Calu3 (cell line): ENCODE measurements at regions of chr11 and their contacts with region 1.

Region 1: DNA sequence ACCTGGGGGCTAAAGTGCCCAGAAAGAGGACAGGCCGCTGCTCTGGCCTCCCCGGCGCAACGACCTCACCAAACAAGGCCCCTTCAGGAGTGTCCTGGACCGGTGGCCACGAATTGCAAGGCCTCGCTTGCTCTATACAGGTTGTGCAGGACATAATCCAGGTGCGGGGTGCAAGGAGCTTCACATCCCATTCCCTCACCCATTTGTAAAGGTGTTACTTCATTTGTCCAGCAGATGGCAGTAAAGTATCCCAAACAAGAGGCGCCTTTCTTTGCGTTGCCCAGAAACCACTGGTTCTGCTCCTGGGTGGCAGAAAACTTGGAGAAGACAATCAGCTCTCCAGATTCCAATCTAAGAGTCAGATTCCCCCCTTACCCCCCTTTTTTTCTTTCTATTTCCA is 35.9 kb upstream of the PRDM11 start:
- DNase-seq: peak; percentile 52
- H3K4me3 Mint-ChIP-seq: no peak overlapping the region
- H3K27ac Mint-ChIP-seq: no peak overlapping the region
- H3K4me1 Mint-ChIP-seq: no peaks in the 10 kb centered on the region
- H3K27me3 Mint-ChIP-seq: peaks cover 48% of the 10 kb centered on the region
- CTCF ChIP-seq: peak; percentile 45

Region 2: GRCh38 chr11:44927174-44927661 is 183.3 kb before region 1 on chr11:
- CTCF ChIA-PET with region 1: interaction called, 116 read pairs
- intact Hi-C with region 1: loop called (anchors 1 kb)
- DNase-seq: peak; percentile 86
- H3K4me3 Mint-ChIP-seq: no peak overlapping the region
- H3K27ac Mint-ChIP-seq: no peak overlapping the region
- H3K4me1 Mint-ChIP-seq: no peaks in the 10 kb centered on the region
- H3K27me3 Mint-ChIP-seq: peaks cover 64% of the 10 kb centered on the region
- CTCF ChIP-seq: peak; percentile 88

Region 3: DNA sequence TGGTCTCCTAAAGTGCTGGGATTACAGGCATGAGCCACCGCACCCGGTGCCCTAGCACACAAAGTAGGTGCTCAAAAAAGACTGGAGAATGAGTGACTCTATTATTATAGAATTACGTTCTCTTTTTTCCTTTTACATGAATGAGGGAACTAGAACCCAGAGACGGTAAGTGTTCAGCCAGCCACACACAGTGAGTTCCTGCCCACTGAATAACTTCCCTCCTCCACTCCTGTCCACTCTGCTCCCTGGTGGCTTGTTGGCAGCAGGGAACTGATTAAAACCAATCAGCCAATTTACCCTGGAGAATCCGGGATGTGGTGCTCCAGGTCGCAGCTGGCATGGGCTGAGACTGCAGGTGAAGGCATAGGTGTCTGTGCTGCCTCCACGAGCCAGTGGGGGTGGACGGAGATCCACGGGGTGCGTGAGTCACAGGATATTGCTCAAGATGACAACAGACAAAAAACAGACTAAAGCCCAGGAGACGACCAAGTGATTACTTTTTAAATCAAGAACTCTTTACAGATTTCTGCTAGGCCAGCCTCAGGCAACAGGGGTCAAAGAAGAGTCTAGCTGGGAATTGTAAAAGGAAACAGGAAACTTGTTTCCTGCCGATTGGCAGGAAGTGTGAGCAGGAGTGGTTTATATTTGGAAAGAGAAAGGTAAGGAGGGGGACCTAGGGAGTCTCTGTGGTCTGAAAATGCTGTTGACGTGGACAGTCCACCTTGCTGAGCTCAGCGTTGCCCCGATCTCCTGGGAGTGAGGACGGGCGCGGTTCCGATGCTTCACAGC is 64.7 kb before region 1 on chr11:
- CTCF ChIA-PET with region 1: no interaction called
- intact Hi-C with region 1: no loop called
- DNase-seq: peak; percentile 32
- H3K4me3 Mint-ChIP-seq: no peak overlapping the region
- H3K27ac Mint-ChIP-seq: no peak overlapping the region
- H3K4me1 Mint-ChIP-seq: peaks cover 11% of the 10 kb centered on the region
- H3K27me3 Mint-ChIP-seq: peaks cover 57% of the 10 kb centered on the region
- CTCF ChIP-seq: no peak

Region 4: GRCh38 chr11:45089251-45089650 is 21.3 kb before region 1 on chr11:
- CTCF ChIA-PET with region 1: no interaction called
- intact Hi-C with region 1: no loop called
- DNase-seq: no peak
- H3K4me3 Mint-ChIP-seq: no peak overlapping the region
- H3K27ac Mint-ChIP-seq: no peak overlapping the region
- H3K4me1 Mint-ChIP-seq: no peaks in the 10 kb centered on the region
- H3K27me3 Mint-ChIP-seq: peaks cover 84% of the 10 kb centered on the region
- CTCF ChIP-seq: no peak

Region 5: GRCh38 chr11:45168366-45169130 is 58.0 kb after region 1 on chr11:
- CTCF ChIA-PET with region 1: no interaction called
- intact Hi-C with region 1: no loop called
- DNase-seq: no peak
- H3K4me3 Mint-ChIP-seq: no peak overlapping the region
- H3K27ac Mint-ChIP-seq: no peak overlapping the region
- H3K4me1 Mint-ChIP-seq: peaks cover 15% of the 10 kb centered on the region
- H3K27me3 Mint-ChIP-seq: no peaks in the 10 kb centered on the region
- CTCF ChIP-seq: no peak

Region 6: DNA sequence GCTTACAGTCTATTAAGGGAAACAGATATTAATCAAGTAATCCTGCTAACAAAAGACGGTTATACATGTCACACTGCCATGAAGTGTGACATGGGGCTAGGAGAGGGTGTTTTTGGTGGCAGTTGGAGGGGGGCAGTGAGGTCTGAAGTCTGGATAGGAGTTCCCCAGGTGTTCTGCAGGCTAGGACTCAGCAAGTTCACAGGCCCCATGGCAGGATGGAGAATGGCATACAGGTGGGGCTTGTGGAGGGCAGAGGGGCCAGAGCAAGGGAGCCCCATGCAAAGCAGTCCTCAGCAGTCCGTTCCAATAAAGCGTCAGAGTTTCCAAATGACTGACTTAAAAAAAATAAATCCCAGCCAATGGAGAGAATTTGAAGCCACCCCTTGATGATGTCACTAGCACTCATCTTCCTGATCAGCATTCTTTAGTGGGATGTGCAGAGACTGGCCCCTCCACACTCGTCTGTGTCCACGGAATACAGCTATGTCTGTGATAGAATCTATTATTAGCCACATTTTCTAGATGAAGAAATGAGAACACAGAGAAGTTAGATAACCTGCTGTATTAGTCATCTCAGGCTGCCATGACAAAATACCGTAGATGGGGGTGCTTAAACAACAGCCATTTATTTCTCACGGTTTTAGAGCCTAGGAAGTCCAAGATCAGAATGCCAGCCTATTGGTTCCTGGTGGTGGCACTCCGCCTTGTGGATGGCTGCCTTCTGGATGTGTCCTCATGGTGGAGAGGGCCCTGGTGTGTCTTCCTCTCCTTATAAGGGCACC is 68.5 kb after region 1 on chr11:
- CTCF ChIA-PET with region 1: interaction called, 4 read pairs
- intact Hi-C with region 1: loop called (anchors 5 kb)
- DNase-seq: no peak
- H3K4me3 Mint-ChIP-seq: no peak overlapping the region
- H3K27ac Mint-ChIP-seq: no peak overlapping the region
- H3K4me1 Mint-ChIP-seq: no peaks in the 10 kb centered on the region
- H3K27me3 Mint-ChIP-seq: no peaks in the 10 kb centered on the region
- CTCF ChIP-seq: no peak

Region 7: GRCh38 chr11:45233121-45233803 is 122.7 kb after region 1 on chr11:
- CTCF ChIA-PET with region 1: interaction called, 9 read pairs
- intact Hi-C with region 1: loop called (anchors 10 kb)
- DNase-seq: peak; percentile 79
- H3K4me3 Mint-ChIP-seq: no peak overlapping the region
- H3K27ac Mint-ChIP-seq: no peak overlapping the region
- H3K4me1 Mint-ChIP-seq: no peaks in the 10 kb centered on the region
- H3K27me3 Mint-ChIP-seq: peaks cover 31% of the 10 kb centered on the region
- CTCF ChIP-seq: peak; percentile 83

Region 8: DNA sequence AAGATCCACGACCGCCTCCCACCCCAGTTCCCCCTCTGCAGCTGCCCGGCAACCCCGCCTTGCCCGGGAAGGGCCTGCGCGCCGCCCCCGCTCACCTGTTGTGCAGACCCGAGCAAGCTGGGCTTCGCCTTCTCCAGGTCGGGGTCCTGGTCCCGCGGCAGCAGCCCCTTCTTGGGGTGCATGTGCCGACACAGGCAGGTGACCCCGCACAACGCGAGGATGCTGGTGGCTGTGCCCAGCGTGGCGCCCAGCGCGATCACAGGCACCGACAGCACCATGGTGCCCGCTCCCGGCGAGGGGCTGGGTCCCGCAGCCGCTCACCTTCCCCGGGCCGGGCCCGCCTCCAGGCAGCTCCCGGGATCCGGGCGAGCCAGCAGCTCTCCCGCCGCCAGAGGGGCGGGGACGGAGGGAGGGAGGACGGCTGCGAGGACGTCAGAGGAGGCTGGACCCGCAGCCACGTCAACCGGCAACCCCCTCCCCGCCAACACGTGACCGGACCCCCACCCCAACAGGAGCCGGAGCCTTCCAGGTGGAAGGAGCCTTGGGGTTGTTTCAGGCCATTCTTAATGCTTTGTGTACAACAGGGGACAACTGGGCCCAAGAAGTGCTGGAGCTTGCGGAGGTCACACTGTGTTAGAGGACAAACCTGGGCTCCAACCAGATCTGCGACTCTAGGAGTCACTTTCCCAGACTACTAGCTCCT is 175.5 kb after region 1 on chr11 and contains the start of gene SYT13:
- CTCF ChIA-PET with region 1: interaction called, 10 read pairs
- intact Hi-C with region 1: no loop called
- DNase-seq: peak; percentile 87
- H3K4me3 Mint-ChIP-seq: peak within 1 kb of the TSS; percentile 73
- H3K27ac Mint-ChIP-seq: peak within 1 kb of the TSS; percentile 34
- H3K4me1 Mint-ChIP-seq: peaks cover 32% of the 10 kb centered on the region
- H3K27me3 Mint-ChIP-seq: peaks cover 23% of the 10 kb centered on the region
- CTCF ChIP-seq: no peak
- total RNA-seq, gene SYT13: 31.1 and 36.8 TPM in 2 replicates

Region 9: DNA sequence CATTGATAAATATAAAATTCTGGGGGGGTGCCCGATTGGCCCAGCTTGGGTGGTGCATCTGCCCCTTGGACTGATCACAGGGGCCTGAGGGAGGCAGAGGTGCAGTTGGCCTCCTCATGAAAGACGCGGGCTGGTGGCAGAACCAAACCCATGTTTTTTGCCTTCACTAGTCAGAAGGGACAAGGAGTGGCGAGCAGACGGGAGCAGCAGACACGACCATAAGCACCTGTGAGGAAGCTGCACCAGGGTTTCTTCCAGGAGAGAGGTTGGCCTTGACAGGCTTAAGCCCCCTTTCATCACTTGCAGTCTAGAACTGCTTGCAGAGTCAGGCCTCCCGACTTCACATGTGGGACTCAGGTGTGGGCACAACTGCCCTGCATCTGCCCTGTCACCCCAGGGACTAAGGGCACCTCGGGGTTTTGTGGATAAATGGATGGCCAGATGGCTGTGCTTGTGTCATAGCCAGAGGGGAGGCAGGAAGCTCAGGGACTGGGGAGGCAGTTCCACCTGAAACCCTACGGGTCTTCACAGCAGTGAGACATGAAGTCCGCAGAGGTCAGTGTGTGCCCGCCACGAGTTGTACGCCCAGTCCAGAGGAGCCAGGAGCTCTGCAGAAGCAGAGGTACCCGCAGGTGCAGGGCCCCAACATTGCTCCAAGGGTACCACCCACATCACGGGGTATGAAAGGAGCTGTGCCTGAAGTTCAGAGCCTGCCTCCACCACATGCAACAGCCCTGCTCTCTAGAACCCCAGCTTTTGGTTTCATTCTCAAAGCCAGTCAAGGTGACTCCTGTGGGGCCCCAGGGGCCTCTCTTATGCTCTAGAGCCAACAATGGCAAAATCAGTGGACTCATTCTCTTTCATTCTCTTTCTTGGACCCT is 193.8 kb after region 1 on chr11:
- CTCF ChIA-PET with region 1: no interaction called
- intact Hi-C with region 1: no loop called
- DNase-seq: no peak
- H3K4me3 Mint-ChIP-seq: no peak overlapping the region
- H3K27ac Mint-ChIP-seq: no peak overlapping the region
- H3K4me1 Mint-ChIP-seq: no peaks in the 10 kb centered on the region
- H3K27me3 Mint-ChIP-seq: peaks cover 65% of the 10 kb centered on the region
- CTCF ChIP-seq: no peak

Region 10: GRCh38 chr11:45332276-45332934 is 221.8 kb after region 1 on chr11:
- CTCF ChIA-PET with region 1: interaction called, 15 read pairs
- intact Hi-C with region 1: loop called (anchors 1 kb)
- DNase-seq: peak; percentile 36
- H3K4me3 Mint-ChIP-seq: no peak overlapping the region
- H3K27ac Mint-ChIP-seq: peak overlapping the region; percentile 31
- H3K4me1 Mint-ChIP-seq: peaks cover 14% of the 10 kb centered on the region
- H3K27me3 Mint-ChIP-seq: peaks cover 63% of the 10 kb centered on the region
- CTCF ChIP-seq: peak; percentile 86